Mammary epithelial cell (primary cell): ENCODE measurements at regions of chr1 and their contacts with region 1.

Region 1: DNA sequence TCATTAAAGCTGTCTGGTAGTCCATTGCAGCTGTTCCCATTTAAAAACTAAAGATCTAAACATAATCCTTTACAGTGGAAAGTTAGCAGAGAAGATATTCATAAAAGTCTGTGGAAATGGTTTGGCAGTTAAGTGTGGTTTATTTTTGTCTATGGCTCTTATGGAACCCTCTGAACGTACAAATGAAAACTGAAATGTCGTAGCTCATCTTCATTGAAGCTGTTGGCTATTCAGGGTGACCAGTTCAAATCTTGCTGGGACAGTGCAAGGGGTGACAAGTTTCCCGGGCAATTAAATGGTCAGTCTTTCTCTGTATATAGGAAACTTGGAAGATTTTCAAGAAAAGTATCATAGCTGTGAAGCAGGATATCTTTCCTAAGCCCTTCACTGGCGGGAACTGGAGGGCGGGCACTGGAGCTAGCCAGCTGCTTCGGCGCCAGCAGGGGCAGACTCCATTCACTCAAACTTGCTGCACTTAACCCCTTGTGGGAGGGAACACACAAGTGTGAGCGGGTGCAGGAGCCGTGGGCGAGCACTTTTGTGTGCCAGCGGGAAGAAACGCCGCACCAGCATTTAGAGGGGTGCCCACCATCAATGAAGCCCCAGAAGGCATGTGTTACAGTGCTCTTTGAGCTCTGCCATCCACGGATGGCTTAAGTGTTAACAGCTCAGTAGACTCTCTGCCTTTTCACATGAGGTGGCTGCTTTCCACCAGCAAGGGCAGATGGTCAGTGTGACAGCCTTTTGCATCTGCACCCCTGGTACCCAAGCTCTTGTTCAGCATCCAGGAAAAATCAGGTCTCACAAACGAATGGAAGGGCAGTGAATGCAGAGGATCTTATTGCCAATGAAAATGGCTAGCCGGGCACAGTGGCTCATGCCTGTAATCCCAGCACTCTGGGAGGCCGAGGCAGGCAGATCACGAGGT is 232.1 kb upstream of the KAZN start:
- DNase-seq: no peak
- H3K4me3 ChIP-seq: no peak overlapping the region
- H3K27ac ChIP-seq: no peak overlapping the region
- H3K4me1 ChIP-seq: no peaks in the 10 kb centered on the region
- H3K27me3 ChIP-seq: no peaks in the 10 kb centered on the region
- CTCF ChIP-seq: no peak

Region 2: DNA sequence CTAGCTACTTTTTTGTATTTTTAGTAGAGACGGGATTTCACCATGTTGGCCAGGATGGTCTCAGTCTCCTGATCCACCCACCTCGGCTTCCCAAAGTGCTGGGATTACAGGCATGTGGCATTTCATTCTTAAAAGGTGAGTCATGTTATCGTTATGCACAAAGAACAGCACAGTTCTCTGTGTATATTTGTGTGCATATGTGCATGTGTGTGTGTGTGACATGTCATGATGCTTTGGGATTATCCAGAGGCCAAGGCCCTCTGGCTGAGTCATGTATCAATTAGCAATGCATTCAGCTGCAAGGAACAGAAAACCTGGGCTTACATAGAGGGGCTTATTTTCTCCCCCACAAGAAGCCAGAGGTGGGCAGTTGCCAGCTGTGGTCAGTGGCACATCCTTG is 69.6 kb before region 1 on chr1:
- CTCF ChIA-PET with region 1: no interaction called
- dilution Hi-C with region 1: loop called (anchors 5 kb)
- in situ Hi-C with region 1: no loop called
- intact Hi-C with region 1: no loop called
- DNase-seq: no peak
- H3K4me3 ChIP-seq: no peak overlapping the region
- H3K27ac ChIP-seq: no peak overlapping the region
- H3K4me1 ChIP-seq: no peaks in the 10 kb centered on the region
- H3K27me3 ChIP-seq: no peaks in the 10 kb centered on the region
- CTCF ChIP-seq: no peak

Region 3: DNA sequence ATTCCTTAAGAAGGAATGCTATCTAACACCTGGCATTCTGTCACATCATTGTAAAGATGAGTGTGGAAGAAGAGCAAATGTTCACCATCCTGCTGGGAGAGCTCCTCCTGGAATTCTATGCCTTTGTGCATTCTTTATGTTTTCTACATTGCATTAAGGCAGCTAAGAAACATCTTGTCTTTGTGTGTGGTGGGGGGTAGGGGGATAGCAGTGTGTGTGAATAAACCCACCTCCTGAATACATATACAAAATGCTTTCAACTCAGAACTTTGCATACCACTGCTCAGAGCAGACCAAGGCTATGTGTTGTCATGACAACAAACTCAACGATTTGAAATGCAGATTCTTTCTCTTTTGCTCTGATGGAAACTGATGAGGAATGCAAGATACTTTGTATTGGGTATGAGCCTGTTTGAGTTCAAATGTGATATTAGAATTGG is 38.5 kb after region 1 on chr1:
- CTCF ChIA-PET with region 1: no interaction called
- dilution Hi-C with region 1: loop called (anchors 5 kb)
- in situ Hi-C with region 1: no loop called
- intact Hi-C with region 1: no loop called
- DNase-seq: no peak
- H3K4me3 ChIP-seq: no peak overlapping the region
- H3K27ac ChIP-seq: no peak overlapping the region
- H3K4me1 ChIP-seq: no peaks in the 10 kb centered on the region
- H3K27me3 ChIP-seq: no peaks in the 10 kb centered on the region
- CTCF ChIP-seq: no peak

Region 4: GRCh38 chr1:14862114-14862771 is 495.9 kb after region 1 on chr1:
- CTCF ChIA-PET with region 1: no interaction called
- dilution Hi-C with region 1: no loop called
- in situ Hi-C with region 1: no loop called
- intact Hi-C with region 1: no loop called
- DNase-seq: no peak
- H3K4me3 ChIP-seq: no peak overlapping the region
- H3K27ac ChIP-seq: no peak overlapping the region
- H3K4me1 ChIP-seq: no peaks in the 10 kb centered on the region
- H3K27me3 ChIP-seq: no peaks in the 10 kb centered on the region
- CTCF ChIP-seq: no peak